ENCODE measurements at regions of chr17 and their contacts with region 1.

Region 1: GRCh38 chr17:48374650-48375230 is 55.3 kb downstream of the SKAP1 start:
- DNase-seq: peak; percentile 48
- ATAC-seq: peak; percentile 48
- H3K4me3 ChIP-seq: no peak overlapping the region
- H3K4me3 Mint-ChIP-seq: no peak overlapping the region
- H3K27ac ChIP-seq: peak overlapping the region in 1 of 2 donors; percentile 36
- H3K27ac Mint-ChIP-seq: peak overlapping the region; percentile 47
- H3K4me1 ChIP-seq: peaks cover 23% of the 10 kb centered on the region in 2 donors
- H3K4me1 Mint-ChIP-seq: peaks cover 24% of the 10 kb centered on the region
- H3K27me3 ChIP-seq: no peaks in the 10 kb centered on the region
- H3K27me3 Mint-ChIP-seq: no peaks in the 10 kb centered on the region
- CTCF ChIP-seq: peak; percentile 50

Region 2: DNA sequence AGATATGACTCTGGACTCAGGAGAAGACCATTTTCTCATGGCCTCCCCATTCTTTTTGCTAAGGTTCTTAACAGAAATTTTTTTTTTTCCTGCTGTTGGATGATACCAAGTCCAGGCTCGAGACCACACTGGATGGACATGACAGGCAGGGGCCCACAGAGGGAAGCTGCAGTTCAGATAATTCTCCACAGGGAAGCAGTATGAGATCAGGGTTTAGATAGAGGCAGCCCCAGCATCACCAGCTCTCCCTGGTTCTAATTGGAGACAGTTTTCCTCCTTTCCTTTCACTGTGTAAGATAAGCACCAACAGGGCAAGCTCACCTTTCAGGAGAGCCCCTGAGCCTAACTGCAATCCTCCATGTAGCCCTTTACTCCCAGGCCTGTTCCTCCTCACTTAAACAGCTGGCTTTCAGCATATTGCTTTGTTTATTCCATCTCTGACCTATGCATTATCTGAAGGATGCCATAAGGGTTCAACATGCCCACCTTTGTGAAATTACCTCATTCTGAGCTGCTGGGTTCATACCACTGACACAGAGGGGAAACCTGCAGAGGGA is 159.1 kb before region 1 on chr17:
- CTCF ChIA-PET with region 1: no interaction called
- POLR2A ChIA-PET with region 1: no interaction called
- intact Hi-C with region 1: no loop called
- DNase-seq: no peak
- ATAC-seq: no peak
- H3K4me3 ChIP-seq: no peak overlapping the region
- H3K4me3 Mint-ChIP-seq: no peak overlapping the region
- H3K27ac ChIP-seq: no peak overlapping the region
- H3K27ac Mint-ChIP-seq: no peak overlapping the region
- H3K4me1 ChIP-seq: no peaks in the 10 kb centered on the region
- H3K4me1 Mint-ChIP-seq: no peaks in the 10 kb centered on the region
- H3K27me3 ChIP-seq: no peaks in the 10 kb centered on the region
- H3K27me3 Mint-ChIP-seq: no peaks in the 10 kb centered on the region
- CTCF ChIP-seq: no peak

Region 3: DNA sequence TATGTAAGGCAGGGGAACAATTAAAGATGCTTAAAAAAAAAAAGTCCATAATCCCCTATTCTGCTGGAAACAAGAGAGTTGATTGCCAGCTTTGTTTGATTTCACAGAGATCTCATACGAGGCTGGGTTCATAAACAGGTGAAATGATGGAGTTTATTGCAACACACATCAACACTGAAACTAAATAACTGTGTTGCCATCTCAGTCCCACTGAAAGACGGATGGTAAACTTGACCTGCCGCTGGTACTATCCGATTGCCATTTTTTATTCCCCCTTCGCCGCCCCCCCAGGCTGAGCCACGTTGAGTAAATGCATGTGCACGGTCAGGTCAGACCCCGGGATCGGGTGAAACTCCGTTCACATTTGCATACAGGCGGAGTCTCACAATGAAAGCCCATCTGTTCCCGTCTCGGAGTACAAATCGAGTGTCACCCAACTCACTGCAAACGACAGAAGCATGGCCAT is 64.0 kb before region 1 on chr17:
- CTCF ChIA-PET with region 1: no interaction called
- POLR2A ChIA-PET with region 1: no interaction called
- intact Hi-C with region 1: no loop called
- DNase-seq: no peak
- ATAC-seq: no peak
- H3K4me3 ChIP-seq: no peak overlapping the region
- H3K4me3 Mint-ChIP-seq: no peak overlapping the region
- H3K27ac ChIP-seq: no peak overlapping the region
- H3K27ac Mint-ChIP-seq: no peak overlapping the region
- H3K4me1 ChIP-seq: peaks cover 0 to 3% of the 10 kb centered on the region in 2 donors
- H3K4me1 Mint-ChIP-seq: peaks cover 9% of the 10 kb centered on the region
- H3K27me3 ChIP-seq: no peaks in the 10 kb centered on the region
- H3K27me3 Mint-ChIP-seq: peaks cover 4% of the 10 kb centered on the region
- CTCF ChIP-seq: no peak

Region 4: GRCh38 chr17:48322060-48322459 is 52.7 kb before region 1 on chr17:
- CTCF ChIA-PET with region 1: no interaction called
- POLR2A ChIA-PET with region 1: no interaction called
- intact Hi-C with region 1: no loop called
- DNase-seq: no peak
- ATAC-seq: no peak
- H3K4me3 ChIP-seq: no peak overlapping the region
- H3K4me3 Mint-ChIP-seq: no peak overlapping the region
- H3K27ac ChIP-seq: no peak overlapping the region
- H3K27ac Mint-ChIP-seq: no peak overlapping the region
- H3K4me1 ChIP-seq: no peaks in the 10 kb centered on the region
- H3K4me1 Mint-ChIP-seq: no peaks in the 10 kb centered on the region
- H3K27me3 ChIP-seq: no peaks in the 10 kb centered on the region
- H3K27me3 Mint-ChIP-seq: peaks cover 3% of the 10 kb centered on the region
- CTCF ChIP-seq: no peak

Region 5: GRCh38 chr17:48357779-48358602 is 16.7 kb before region 1 on chr17:
- CTCF ChIA-PET with region 1: interaction called, 27 read pairs
- POLR2A ChIA-PET with region 1: no interaction called
- intact Hi-C with region 1: loop called (anchors 2 kb)
- DNase-seq: peak; percentile 40
- ATAC-seq: peak; percentile 33
- H3K4me3 ChIP-seq: no peak overlapping the region
- H3K4me3 Mint-ChIP-seq: no peak overlapping the region
- H3K27ac ChIP-seq: peak overlapping the region; percentile 25 to 57
- H3K27ac Mint-ChIP-seq: peak overlapping the region; percentile 67
- H3K4me1 ChIP-seq: peaks cover 9 to 14% of the 10 kb centered on the region in 2 donors
- H3K4me1 Mint-ChIP-seq: peaks cover 13% of the 10 kb centered on the region
- H3K27me3 ChIP-seq: no peaks in the 10 kb centered on the region
- H3K27me3 Mint-ChIP-seq: no peaks in the 10 kb centered on the region
- CTCF ChIP-seq: no peak